ENCODE measurements at regions of chr10 and their contacts with region 1.

Region 1: GRCh38 chr10:96513698-96514561 is at the start of gene TLL2:
- DNase-seq: peak; percentile 87
- H3K4me3 ChIP-seq: peak within 1 kb of the TSS; percentile 35 to 56 (median 45)
- H3K27ac ChIP-seq: peak within 1 kb of the TSS in 3 of 4 donors; percentile 41 to 71 (median 68)
- H3K4me1 ChIP-seq: peaks cover 19 to 25% (median 24%) of the 10 kb centered on the region in 4 donors
- H3K27me3 ChIP-seq: peaks cover 19% of the 10 kb centered on the region
- CTCF ChIP-seq: peak; percentile 51 to 72 (median 62)
- EP300 ChIP-seq: no peak
- POLR2A ChIP-seq: peak; percentile 12
- total RNA-seq, gene TLL2: 0.32 to 0.96 TPM in 2 of 4 donors, not detected in the others

Region 2: GRCh38 chr10:96309628-96310320 is 204.2 kb before region 1 on chr10:
- in situ Hi-C with region 1: no loop called
- intact Hi-C with region 1: no loop called
- DNase-seq: no peak
- H3K4me3 ChIP-seq: no peak overlapping the region
- H3K27ac ChIP-seq: peak overlapping the region in 3 of 4 donors; percentile 45 to 62 (median 56)
- H3K4me1 ChIP-seq: peaks cover 12 to 22% (median 15%) of the 10 kb centered on the region in 4 donors
- H3K27me3 ChIP-seq: no peaks in the 10 kb centered on the region
- CTCF ChIP-seq: no peak
- EP300 ChIP-seq: no peak
- POLR2A ChIP-seq: no peak

Region 3: DNA sequence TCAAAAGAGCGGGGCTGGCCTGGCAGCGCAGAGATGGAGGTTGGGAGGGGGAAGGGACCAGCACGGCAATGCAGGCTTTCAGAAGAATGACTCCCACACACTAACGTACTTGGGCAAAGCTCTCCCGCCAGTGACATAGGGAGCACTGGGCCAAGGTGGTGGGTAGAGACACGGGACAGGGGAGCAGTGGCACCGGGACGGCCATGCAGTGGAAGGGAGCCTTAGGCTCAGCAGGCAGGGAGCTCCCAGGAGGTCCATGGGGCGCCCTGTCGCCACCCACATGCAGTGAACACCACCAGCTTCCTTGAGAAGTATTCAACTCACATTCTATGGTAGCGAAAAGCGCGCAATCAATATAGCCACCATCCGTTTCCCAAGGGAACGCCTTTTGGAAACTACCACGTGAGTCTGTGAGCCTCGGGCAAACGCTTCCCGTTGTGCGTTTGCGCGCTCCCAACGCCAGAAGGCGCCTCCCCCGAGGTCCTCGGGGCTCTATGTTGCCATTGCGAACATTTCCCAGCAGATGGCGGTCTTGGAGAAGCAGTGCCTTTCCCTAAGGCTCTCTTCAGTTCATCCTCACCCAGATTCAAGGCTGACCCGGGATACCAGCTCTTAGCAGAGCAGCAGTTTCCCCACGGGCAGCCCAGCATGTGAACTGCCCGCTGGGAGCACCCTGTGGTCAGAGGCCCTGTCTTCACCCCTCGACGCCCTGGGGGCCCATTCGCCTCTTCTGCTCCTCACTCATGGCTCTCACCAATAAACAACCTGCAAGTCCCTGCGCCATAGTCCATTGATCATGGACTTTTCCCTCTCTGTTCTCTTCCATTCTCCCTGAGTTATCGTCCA is 138.7 kb before region 1 on chr10:
- in situ Hi-C with region 1: loop called in 1 of 4 experiments (anchors 25 kb)
- intact Hi-C with region 1: no loop called
- DNase-seq: peak; percentile 88
- H3K4me3 ChIP-seq: peak overlapping the region; percentile 7 to 41 (median 24)
- H3K27ac ChIP-seq: no peak overlapping the region
- H3K4me1 ChIP-seq: peaks cover 4 to 24% (median 12%) of the 10 kb centered on the region in 4 donors
- H3K27me3 ChIP-seq: no peaks in the 10 kb centered on the region
- CTCF ChIP-seq: peak; percentile 89 to 96 (median 92)
- EP300 ChIP-seq: no peak
- POLR2A ChIP-seq: no peak

Region 4: DNA sequence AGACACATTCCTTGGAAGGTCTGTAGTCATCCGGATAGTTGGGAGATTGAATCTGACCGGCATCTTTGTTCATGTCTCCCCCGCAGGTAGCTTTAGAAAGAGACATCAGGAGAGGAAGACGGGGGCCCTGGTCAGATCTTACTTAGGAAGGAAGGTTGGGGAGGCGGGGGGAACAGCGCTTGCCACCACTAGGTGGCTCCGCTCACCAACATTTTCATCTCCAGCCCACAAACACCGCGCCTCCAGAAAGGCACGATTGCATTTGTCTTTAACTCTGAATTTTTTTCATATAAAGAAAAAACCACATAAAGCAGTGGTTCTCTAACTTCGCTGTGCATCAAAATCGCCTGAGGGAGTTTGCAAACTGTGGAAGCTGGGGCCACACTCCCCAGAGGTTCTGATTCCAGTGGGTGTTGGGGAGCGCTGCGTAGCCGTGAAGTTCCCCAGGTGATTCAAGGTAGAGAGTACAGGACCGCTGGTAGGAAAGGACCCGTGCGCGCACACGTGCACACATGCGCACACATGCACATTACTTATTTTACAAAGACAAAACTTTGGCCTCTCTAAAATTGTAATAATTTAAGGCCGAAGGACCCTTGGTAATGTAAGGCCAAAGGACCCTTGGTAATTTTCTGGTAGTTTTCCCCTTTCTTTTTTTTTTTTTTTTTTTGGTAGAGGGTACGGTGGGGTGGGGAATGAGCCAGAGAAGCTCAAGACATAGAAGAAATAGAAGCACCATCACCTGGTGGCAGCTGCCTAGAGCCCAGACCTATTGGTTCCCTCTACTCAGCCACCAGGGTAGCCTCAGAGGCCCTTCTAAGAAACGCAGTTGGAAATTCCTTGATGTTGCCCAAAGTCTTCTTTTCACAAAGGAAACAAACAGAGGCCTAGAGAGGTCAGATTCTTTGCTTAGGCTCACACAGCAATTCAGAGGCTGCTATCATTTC is 117.7 kb before region 1 on chr10:
- in situ Hi-C with region 1: loop called in 2 of 4 experiments (anchors 10 to 25 kb)
- intact Hi-C with region 1: loop called (anchors 5 kb)
- DNase-seq: peak; percentile 68
- H3K4me3 ChIP-seq: peak overlapping the region in 1 of 4 donors; percentile 36
- H3K27ac ChIP-seq: no peak overlapping the region
- H3K4me1 ChIP-seq: peaks cover 0 to 6% (median 0%) of the 10 kb centered on the region in 4 donors
- H3K27me3 ChIP-seq: peaks cover 36% of the 10 kb centered on the region
- CTCF ChIP-seq: peak; percentile 82 to 86 (median 84)
- EP300 ChIP-seq: no peak
- POLR2A ChIP-seq: no peak

Region 5: DNA sequence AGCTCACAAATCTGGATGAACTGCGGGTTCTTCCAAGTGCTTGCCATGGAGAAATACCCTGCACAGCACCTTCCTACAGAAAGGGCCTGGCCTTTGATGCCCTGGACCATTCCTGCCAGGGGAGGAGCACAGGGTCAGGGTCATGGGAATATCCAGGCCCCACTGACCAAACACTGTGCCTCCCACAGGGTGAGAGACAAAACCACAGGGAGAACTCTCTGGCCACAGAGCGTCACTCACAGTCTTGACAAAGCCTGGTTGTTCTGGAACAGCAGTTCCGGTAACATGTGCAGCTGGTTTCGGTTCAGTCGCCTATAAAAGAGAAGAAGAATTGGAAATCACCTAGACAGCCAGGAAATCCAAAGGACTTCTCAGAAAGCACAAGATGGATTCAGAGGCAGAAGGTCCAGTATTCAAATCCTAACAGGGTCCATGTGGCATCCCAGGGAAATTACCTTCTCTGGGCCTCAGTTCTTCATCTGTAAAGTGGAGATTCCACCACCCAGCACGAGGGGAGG is 643.7 kb after region 1 on chr10:
- in situ Hi-C with region 1: no loop called
- intact Hi-C with region 1: no loop called
- DNase-seq: peak; percentile 31
- H3K4me3 ChIP-seq: no peak overlapping the region
- H3K27ac ChIP-seq: no peak overlapping the region
- H3K4me1 ChIP-seq: no peaks in the 10 kb centered on the region
- H3K27me3 ChIP-seq: no peaks in the 10 kb centered on the region
- CTCF ChIP-seq: no peak
- EP300 ChIP-seq: no peak
- POLR2A ChIP-seq: no peak